ENCODE measurements at regions of chr15 and their contacts with region 1.

Region 1: DNA sequence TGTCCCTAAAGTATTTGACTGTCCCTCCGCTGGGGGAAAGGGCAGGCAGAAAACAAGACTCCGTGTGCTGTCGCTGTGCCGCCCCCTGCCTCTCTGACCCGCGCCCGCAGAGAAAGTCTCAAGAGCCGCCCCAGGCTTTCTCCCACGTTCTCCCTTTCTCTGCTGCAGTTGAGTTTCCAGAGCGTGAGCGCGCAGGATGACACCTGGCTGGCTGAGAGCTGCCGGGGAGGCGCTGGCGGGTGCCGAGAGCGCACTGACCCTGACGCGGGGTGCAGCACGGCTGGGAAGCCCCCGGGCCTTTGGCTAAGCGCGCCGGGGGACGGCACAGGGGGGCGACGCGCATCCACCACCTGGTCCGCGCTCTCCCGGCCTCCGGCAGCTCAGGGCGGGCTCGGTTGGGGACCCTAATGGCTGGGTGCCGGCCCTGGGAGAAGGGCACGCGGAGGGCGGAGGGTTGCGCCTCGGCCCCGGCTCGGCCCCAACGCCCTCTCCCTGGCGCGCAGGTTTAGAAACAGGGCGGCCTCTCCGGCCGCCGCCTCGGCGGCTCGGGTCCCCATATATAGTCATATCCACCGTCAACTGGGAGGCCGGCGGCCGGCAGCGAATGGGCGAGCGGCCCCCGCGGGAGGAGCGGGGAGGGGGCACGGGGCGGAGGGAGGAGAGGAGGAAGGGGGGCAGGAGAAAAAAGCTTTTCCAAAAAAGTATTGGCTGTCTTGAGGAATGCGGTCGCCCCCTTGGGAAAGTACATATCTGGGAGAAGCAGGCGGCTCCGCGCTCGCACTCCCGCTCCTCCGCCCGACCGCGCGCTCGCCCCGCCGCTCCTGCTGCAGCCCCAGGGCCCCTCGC is at the start of gene TPM1:
- DNase-seq: peak; percentile 84 to 94 (median 88)
- H3K4me3 ChIP-seq: peak within 1 kb of the TSS; percentile 87
- H3K27ac ChIP-seq: peak within 1 kb of the TSS; percentile 3 to 73
- H3K4me1 ChIP-seq: no peaks in the 10 kb centered on the region
- H3K27me3 ChIP-seq: no peaks in the 10 kb centered on the region
- CTCF ChIP-seq: no peak
- EP300 ChIP-seq: no peak
- POLR2A ChIP-seq: peak; percentile 24
- total RNA-seq, gene TPM1: 204 to 695 (median 319) TPM

Region 2: DNA sequence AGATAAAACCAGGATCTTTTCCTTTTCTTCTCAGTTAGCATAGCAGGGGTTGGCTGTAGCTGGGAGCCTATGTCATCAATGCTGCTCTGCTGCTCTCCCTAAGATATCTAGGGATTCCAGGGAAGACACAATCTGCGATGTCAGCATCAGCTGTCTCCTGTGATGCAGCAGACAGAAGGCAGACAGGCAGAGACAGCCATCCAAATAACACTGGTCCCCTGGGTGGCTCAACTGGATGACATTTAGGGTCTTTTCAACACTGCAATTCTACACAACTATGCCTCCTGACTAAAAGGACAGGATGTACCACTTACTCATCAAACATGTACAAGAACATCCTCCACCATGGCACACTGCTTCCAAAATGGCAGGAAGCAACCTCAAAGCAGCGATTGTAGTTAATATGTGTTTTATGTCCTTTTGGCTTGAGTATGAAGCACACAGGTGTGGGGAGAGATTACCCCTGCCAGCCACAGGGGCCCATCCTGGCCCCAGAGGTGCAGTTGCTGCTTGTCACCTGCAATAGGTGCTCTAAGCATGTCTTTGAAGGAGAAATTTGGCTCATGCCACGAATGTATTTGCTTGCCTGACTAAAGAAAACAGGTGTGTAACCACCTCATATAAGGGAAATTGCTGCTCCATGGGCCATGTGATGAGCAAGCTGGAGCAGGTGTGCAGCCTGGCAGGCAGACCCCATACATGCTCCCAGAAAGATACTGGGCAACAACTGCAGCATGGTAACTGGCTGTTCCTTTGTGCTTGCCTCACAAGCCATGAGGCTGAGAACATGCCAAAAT is 1339.8 kb before region 1 on chr15:
- intact Hi-C with region 1: no loop called
- DNase-seq: no peak
- H3K4me3 ChIP-seq: no peak overlapping the region
- H3K27ac ChIP-seq: no peak overlapping the region
- H3K4me1 ChIP-seq: no peaks in the 10 kb centered on the region
- H3K27me3 ChIP-seq: no peaks in the 10 kb centered on the region
- CTCF ChIP-seq: no peak
- EP300 ChIP-seq: no peak
- POLR2A ChIP-seq: no peak

Region 3: DNA sequence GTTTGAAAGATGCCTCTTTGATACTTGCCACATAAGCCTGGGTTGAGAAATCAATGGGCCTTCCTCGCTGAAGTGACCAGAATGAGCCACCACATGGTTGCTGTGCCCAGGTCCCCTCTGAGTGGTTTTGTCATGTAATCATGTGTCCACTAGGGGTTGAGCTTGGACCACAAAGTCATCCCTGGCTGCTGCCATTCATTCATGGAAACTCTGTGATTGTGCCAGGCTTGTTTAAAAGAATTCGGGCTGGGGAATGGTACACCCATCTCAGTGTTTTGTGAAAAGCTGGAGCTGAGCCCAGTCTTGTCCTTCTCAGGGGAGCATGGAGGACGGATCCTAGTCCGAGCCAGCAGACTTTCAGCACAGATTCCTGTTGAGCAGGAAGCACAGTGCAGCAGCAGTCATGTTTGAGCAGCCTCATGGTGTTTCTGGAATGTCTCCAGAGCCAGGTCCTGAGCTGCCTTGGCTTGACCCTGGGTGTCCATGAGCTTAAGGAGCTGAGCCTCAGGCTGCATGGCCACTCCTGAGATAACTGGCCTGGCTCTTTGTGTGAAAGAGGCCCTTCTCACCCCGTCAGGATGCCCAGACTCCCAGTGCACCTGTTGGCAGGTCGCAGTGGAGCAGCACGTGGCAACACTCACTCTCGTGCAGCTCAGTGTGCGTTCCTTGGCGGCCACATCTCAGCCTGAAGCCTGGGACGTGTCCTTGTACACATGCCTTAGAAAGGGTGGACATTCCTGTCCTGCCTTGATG is 260.0 kb before region 1 on chr15:
- intact Hi-C with region 1: loop called in 2 of 4 experiments (anchors 5 kb)
- DNase-seq: peak; percentile 55 to 76 (median 69)
- H3K4me3 ChIP-seq: no peak overlapping the region
- H3K27ac ChIP-seq: no peak overlapping the region
- H3K4me1 ChIP-seq: peaks cover 14% of the 10 kb centered on the region
- H3K27me3 ChIP-seq: no peaks in the 10 kb centered on the region
- CTCF ChIP-seq: peak; percentile 26 to 55 (median 33)
- EP300 ChIP-seq: no peak
- POLR2A ChIP-seq: no peak

Region 4: GRCh38 chr15:62847900-62848489 is 194.2 kb before region 1 on chr15:
- intact Hi-C with region 1: loop called in 2 of 4 experiments (anchors 5 to 10 kb)
- DNase-seq: peak; percentile 69 to 81 (median 77)
- H3K4me3 ChIP-seq: no peak overlapping the region
- H3K27ac ChIP-seq: no peak overlapping the region
- H3K4me1 ChIP-seq: no peaks in the 10 kb centered on the region
- H3K27me3 ChIP-seq: no peaks in the 10 kb centered on the region
- CTCF ChIP-seq: peak in 2 of 3 donors; percentile 41 to 58
- EP300 ChIP-seq: no peak
- POLR2A ChIP-seq: no peak

Region 5: DNA sequence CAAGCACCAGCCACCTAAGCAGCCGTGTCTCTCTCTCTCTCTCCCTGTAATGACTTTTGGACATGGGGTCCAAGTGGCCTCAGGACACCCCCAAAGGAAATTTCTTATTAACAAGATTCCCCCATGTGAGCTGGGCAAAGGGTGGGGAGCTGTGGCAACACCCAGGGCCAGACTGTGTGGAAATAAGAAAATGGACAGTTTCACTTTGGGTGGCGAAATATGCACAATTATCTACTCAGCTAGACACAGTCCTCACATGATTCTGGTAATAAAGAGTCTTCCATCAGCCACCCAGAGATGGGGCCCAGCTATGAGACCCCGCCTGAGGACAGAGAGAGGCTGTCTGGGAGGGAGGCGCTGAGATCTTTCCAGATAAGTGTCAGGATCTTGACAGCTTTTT is 96.4 kb before region 1 on chr15:
- intact Hi-C with region 1: loop called in 1 of 4 experiments (anchors 5 kb)
- DNase-seq: no peak
- H3K4me3 ChIP-seq: no peak overlapping the region
- H3K27ac ChIP-seq: no peak overlapping the region
- H3K4me1 ChIP-seq: peaks cover 9% of the 10 kb centered on the region
- H3K27me3 ChIP-seq: no peaks in the 10 kb centered on the region
- CTCF ChIP-seq: no peak
- EP300 ChIP-seq: no peak
- POLR2A ChIP-seq: no peak

Region 6: GRCh38 chr15:62977952-62978811 is 64.0 kb before region 1 on chr15:
- intact Hi-C with region 1: no loop called
- DNase-seq: no peak
- H3K4me3 ChIP-seq: no peak overlapping the region
- H3K27ac ChIP-seq: no peak overlapping the region
- H3K4me1 ChIP-seq: peaks cover 1% of the 10 kb centered on the region
- H3K27me3 ChIP-seq: no peaks in the 10 kb centered on the region
- CTCF ChIP-seq: no peak
- EP300 ChIP-seq: no peak
- POLR2A ChIP-seq: no peak

Region 7: GRCh38 chr15:63122002-63122893 is 80.1 kb after region 1 on chr15:
- intact Hi-C with region 1: no loop called
- DNase-seq: peak; percentile 69 to 89 (median 81)
- H3K4me3 ChIP-seq: peak overlapping the region; percentile 96
- H3K27ac ChIP-seq: peak overlapping the region; percentile 75 to 84
- H3K4me1 ChIP-seq: no peaks in the 10 kb centered on the region
- H3K27me3 ChIP-seq: no peaks in the 10 kb centered on the region
- CTCF ChIP-seq: peak in 1 of 3 donors; percentile 6
- EP300 ChIP-seq: no peak
- POLR2A ChIP-seq: no peak